ENCODE measurements at regions of chr10 and their contacts with region 1.

Region 1: DNA sequence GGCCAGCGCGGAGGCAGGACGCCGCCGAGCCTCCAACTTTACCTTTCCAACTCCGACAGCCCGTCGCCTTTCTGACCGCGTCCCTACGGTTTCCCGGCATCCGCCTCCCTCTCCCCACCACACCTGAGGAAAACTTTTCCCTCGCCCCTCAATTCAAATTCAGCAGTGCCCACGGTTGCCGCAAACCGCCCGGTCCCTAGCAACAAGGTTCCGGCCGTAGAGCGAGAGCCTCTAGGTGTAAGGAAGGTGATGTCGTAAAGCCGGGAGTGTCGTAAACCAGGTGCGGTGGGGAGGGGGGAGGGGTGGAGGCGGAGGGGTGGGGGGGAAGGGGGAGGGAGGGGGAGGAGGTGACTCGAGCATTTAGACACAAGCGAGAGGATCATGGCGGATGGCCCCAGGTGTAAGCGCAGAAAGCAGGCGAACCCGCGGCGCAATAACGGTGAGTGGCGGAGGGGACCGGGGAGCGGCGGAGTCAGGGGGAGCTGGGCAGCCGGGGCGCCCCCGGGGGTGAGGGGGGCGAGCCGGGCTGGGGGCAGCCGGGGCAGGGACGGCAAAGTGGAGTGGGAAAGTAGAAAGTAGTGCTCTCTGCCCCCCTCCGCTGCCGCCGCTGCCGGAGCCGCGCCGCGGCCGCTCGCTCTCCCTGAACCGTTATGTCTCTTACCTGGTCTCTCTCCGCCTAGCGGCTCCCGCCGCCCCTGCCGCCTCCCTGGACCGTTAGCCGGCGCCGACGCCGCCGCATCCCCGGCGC is at the start of gene ZEB1:
- DNase-seq: peak; percentile 91 to 97 (median 92)
- H3K4me3 ChIP-seq: peak within 1 kb of the TSS; percentile 55 to 74
- H3K4me3 Mint-ChIP-seq: peak within 1 kb of the TSS; percentile 97 to 100 (median 99)
- H3K27ac ChIP-seq: peak within 1 kb of the TSS; percentile 88
- H3K27ac Mint-ChIP-seq: peak within 1 kb of the TSS; percentile 94 to 100 (median 99)
- H3K4me1 ChIP-seq: peaks cover 30% of the 10 kb centered on the region
- H3K4me1 Mint-ChIP-seq: peaks cover 24 to 53% (median 38%) of the 10 kb centered on the region in 4 donors
- H3K27me3 ChIP-seq: no peaks in the 10 kb centered on the region
- H3K27me3 Mint-ChIP-seq: no peaks in the 10 kb centered on the region
- total RNA-seq, gene ZEB1: 68.7 to 70.6 TPM

Region 2: DNA sequence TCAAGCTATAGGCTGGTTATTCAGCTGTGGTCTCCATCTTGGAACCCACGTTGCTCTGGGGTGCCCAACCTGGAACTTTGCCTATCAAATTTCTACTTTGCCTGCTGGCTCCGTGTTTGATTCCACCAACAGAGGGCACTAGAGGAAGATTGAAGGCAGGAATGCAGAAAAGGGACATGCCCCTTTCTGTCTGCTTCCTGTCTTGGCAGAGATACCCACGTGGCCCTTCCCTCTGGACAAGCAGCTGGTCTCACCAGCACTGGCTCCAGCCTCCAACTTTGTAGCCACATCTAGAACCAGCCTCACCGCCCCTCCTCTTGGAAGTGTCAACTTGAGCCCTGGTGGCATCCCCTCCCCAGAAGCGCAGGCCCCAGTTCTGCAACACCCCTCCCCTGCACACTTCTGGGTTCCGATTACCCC is 235.3 kb before region 1 on chr10:
- CTCF ChIA-PET with region 1: no interaction called
- POLR2A ChIA-PET with region 1: no interaction called
- intact Hi-C with region 1: loop called (anchors 2 kb)
- DNase-seq: peak; percentile 40 to 59 (median 50)
- H3K4me3 ChIP-seq: no peak overlapping the region
- H3K4me3 Mint-ChIP-seq: no peak overlapping the region
- H3K27ac ChIP-seq: no peak overlapping the region
- H3K27ac Mint-ChIP-seq: no peak overlapping the region
- H3K4me1 ChIP-seq: no peaks in the 10 kb centered on the region
- H3K4me1 Mint-ChIP-seq: peaks cover 0 to 1% (median under 1%) of the 10 kb centered on the region in 4 donors
- H3K27me3 ChIP-seq: no peaks in the 10 kb centered on the region
- H3K27me3 Mint-ChIP-seq: no peaks in the 10 kb centered on the region

Region 3: DNA sequence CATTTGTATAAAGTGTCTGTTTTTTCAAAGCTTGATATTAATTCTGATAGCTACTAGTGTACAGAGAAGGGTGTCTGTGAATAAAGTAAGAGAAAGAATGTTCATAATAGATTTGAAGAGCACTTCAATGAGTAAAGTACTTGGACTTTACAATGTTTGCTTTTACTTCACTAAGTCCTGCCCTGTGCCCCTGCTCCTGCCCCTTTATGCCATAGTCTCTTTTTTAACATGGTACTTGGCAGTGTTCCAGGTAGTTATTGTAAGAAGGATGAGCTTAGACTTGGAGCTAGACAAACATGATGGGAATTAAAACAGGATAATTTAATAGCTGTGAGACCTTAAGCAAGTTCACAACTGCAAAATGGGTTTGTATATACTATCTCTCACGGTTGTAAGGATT is 41.0 kb after region 1 on chr10:
- CTCF ChIA-PET with region 1: no interaction called
- POLR2A ChIA-PET with region 1: no interaction called
- intact Hi-C with region 1: loop called (anchors 5 kb)
- DNase-seq: no peak
- H3K4me3 ChIP-seq: no peak overlapping the region
- H3K4me3 Mint-ChIP-seq: no peak overlapping the region
- H3K27ac ChIP-seq: no peak overlapping the region
- H3K27ac Mint-ChIP-seq: peak overlapping the region in 1 of 7 donors; percentile 77
- H3K4me1 ChIP-seq: peaks cover 4% of the 10 kb centered on the region
- H3K4me1 Mint-ChIP-seq: peaks cover 26 to 46% (median 35%) of the 10 kb centered on the region in 4 donors
- H3K27me3 ChIP-seq: no peaks in the 10 kb centered on the region
- H3K27me3 Mint-ChIP-seq: no peaks in the 10 kb centered on the region

Region 4: GRCh38 chr10:31928549-31929260 is 609.7 kb after region 1 on chr10 and contains the start of gene ARHGAP12:
- CTCF ChIA-PET with region 1: no interaction called
- POLR2A ChIA-PET with region 1: no interaction called
- intact Hi-C with region 1: loop called (anchors 2 kb)
- DNase-seq: peak; percentile 84 to 88 (median 85)
- H3K4me3 ChIP-seq: peak within 1 kb of the TSS; percentile 86 to 91
- H3K4me3 Mint-ChIP-seq: peak within 1 kb of the TSS; percentile 93 to 95 (median 93)
- H3K27ac ChIP-seq: peak within 1 kb of the TSS; percentile 66
- H3K27ac Mint-ChIP-seq: peak within 1 kb of the TSS; percentile 66 to 97 (median 93)
- H3K4me1 ChIP-seq: peaks cover 54% of the 10 kb centered on the region
- H3K4me1 Mint-ChIP-seq: peaks cover 36 to 51% (median 44%) of the 10 kb centered on the region in 4 donors
- H3K27me3 ChIP-seq: no peaks in the 10 kb centered on the region
- H3K27me3 Mint-ChIP-seq: no peaks in the 10 kb centered on the region
- total RNA-seq, gene ARHGAP12: 30.1 to 31.2 TPM

Measured in CD4-positive, alpha-beta memory T cell (primary cell).